Activated T-helper 1 cell treated with anti-CD3 and anti-CD28 coated beads, Interleukin-12 subunit alpha, Interleukin-12 subunit beta, Interleukin-2, Interleukin-4 antibody, amounts not matched to agents 30 ng/mL and 10 ng/mL and 1 ng/mL, durations not matched to agents 14 hours and 24 hours and 36 hours (primary cell): ENCODE measurements at regions of chr12 and their contacts with region 1.

Region 1: DNA sequence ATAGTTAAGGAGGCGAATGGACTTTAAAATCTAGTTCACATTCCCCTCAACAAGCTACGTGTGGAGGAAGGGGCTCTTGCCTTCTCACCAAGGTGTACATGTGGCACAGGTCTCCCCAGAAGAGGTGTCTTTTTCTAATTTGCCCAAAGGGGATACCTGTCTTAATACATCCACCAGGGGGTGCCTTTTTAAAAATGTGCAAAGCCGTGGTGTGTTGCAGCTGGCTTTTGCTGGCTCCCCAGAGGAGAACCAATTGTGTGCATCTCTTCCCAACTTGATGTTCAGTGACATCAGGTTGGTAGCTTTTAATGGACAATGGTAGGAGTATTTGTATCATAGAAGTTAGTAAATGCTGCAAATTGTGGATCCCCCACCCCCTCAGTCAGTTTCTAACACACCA is 33.8 kb downstream of the CREBL2 start:
- DNase-seq: peak; percentile 26
- H3K4me3 Mint-ChIP-seq: no peak overlapping the region
- H3K27ac Mint-ChIP-seq: peak overlapping the region; percentile 61
- H3K4me1 Mint-ChIP-seq: peaks cover 12% of the 10 kb centered on the region
- H3K27me3 Mint-ChIP-seq: no peaks in the 10 kb centered on the region

Region 2: DNA sequence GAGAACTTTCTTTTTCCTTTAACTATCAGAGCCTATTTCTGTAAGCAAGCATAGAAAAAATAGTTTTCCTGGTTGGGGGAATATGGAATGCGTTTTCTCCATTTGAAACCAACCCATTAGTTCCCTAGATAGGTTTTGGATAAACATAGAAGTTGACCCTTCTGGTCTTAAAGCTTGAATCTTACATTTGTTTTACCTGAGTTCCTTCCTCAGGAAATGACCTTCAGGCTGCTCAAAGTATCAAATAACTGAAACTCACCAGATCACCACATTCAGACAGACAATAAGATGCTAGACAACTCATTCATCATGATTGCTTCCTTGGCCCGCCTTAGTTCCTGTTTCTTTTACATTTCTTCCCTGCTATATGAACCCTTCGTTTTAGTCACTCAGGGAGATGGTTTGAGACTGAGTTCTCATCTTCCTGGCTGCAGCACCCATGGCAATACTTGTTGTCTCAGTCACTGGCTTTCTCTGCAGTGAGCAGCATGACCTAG is 430.8 kb before region 1 on chr12:
- intact Hi-C with region 1: no loop called
- DNase-seq: no peak
- H3K4me3 Mint-ChIP-seq: no peak overlapping the region
- H3K27ac Mint-ChIP-seq: no peak overlapping the region
- H3K4me1 Mint-ChIP-seq: peaks cover 6% of the 10 kb centered on the region
- H3K27me3 Mint-ChIP-seq: peaks cover 34% of the 10 kb centered on the region

Region 3: DNA sequence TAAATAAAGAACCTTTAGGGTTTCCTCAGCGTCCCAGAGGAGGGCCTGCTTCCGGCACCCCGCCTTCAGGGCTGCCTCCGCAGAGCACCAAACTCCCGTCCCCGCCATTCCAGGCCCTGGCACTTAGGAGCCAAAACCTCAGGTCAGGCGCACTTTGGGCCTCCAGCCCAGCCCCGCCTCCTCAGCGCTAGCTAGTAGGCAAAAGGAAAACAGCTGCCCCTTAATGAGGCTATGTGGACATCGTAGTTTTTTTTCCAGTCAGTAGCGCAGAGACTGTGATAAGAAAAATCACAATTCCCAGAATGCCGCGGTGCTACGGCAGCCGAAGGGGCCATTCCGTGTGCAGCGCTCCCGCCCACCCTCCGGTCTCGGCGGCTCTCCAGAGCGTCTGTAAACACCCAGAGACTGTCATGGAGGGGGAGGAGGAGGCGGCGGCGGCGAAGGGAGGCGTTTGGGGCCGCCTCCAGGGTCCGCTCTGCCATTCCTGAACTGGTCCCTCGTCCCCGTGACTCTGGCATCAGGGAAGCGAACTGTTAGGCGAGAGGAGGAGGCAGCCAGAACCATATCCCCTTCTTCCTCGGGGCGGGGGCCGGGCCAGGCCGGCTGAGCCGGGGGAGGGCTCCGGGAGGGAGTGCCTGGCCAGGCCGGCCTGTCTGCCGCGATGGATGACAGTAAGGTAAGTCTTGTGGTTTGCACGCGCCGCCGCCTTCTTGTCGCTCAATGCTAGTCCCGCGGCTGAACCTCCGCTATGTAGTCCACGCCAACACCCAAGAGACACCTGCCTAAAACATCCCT is 33.8 kb before region 1 on chr12 and contains the start of gene CREBL2:
- intact Hi-C with region 1: loop called (anchors 2 kb)
- DNase-seq: peak; percentile 78
- H3K4me3 Mint-ChIP-seq: peak within 1 kb of the TSS; percentile 95
- H3K27ac Mint-ChIP-seq: peak within 1 kb of the TSS; percentile 96
- H3K4me1 Mint-ChIP-seq: peaks cover 47% of the 10 kb centered on the region
- H3K27me3 Mint-ChIP-seq: no peaks in the 10 kb centered on the region
- total RNA-seq, gene CREBL2: 16.7 and 17.9 TPM in 2 replicates

Region 4: GRCh38 chr12:12704593-12705230 is 59.2 kb after region 1 on chr12:
- intact Hi-C with region 1: loop called (anchors 1 kb)
- DNase-seq: no peak
- H3K4me3 Mint-ChIP-seq: peak overlapping the region; percentile 11
- H3K27ac Mint-ChIP-seq: peak overlapping the region; percentile 14
- H3K4me1 Mint-ChIP-seq: peaks cover 25% of the 10 kb centered on the region
- H3K27me3 Mint-ChIP-seq: no peaks in the 10 kb centered on the region

Region 5: DNA sequence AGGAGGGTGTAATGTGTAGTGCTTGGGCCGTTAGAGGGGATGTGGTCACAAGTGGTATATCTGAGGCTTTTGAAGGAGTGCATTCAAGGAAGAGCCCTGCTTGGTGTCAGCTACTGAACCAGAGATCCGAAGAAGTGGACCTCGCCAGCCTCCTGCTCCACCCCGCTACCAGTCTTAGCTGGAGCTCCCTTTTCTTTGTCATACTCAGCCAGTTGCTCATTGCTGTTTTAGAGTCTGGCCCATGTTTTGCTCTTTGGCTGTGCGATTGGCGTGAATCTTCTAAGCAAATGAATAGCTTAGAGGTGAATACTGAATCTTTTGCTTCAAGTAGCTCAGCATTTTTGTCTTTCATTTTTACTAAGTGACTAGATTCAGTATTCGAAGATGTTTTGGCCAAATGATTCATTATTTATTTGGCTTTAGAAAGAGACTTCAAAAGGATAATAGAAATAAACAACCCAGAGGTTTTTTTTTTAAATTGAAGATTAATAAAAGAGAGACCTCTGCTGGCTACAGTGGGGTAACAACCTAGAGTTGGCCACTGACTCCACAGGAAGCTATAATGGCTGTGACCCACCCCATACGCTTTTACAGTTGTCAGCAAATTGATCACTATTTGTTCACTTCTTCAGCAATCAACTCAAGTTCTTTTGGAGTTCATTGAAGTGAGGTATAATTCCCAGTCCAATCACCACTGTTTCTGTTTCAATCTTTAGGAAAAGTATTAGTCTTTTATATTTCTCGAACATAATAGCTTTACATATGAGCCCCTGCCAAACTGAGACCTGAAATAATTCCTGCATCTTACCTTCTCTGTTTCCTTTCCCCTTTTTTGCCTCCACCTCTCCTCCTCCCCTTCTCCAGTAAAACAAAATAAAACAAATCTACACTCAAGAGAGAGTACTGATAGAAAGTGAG is 91.5 kb after region 1 on chr12:
- intact Hi-C with region 1: loop called (anchors 1 kb)
- DNase-seq: peak; percentile 42
- H3K4me3 Mint-ChIP-seq: peak overlapping the region; percentile 74
- H3K27ac Mint-ChIP-seq: peak overlapping the region; percentile 89
- H3K4me1 Mint-ChIP-seq: peaks cover 59% of the 10 kb centered on the region
- H3K27me3 Mint-ChIP-seq: no peaks in the 10 kb centered on the region

Region 6: GRCh38 chr12:12946686-12947355 is 301.3 kb after region 1 on chr12:
- intact Hi-C with region 1: no loop called
- DNase-seq: no peak
- H3K4me3 Mint-ChIP-seq: no peak overlapping the region
- H3K27ac Mint-ChIP-seq: no peak overlapping the region
- H3K4me1 Mint-ChIP-seq: no peaks in the 10 kb centered on the region
- H3K27me3 Mint-ChIP-seq: peaks cover 10% of the 10 kb centered on the region